H1 (cell line): ENCODE measurements at regions of chr14 and their contacts with region 1.

Region 1: DNA sequence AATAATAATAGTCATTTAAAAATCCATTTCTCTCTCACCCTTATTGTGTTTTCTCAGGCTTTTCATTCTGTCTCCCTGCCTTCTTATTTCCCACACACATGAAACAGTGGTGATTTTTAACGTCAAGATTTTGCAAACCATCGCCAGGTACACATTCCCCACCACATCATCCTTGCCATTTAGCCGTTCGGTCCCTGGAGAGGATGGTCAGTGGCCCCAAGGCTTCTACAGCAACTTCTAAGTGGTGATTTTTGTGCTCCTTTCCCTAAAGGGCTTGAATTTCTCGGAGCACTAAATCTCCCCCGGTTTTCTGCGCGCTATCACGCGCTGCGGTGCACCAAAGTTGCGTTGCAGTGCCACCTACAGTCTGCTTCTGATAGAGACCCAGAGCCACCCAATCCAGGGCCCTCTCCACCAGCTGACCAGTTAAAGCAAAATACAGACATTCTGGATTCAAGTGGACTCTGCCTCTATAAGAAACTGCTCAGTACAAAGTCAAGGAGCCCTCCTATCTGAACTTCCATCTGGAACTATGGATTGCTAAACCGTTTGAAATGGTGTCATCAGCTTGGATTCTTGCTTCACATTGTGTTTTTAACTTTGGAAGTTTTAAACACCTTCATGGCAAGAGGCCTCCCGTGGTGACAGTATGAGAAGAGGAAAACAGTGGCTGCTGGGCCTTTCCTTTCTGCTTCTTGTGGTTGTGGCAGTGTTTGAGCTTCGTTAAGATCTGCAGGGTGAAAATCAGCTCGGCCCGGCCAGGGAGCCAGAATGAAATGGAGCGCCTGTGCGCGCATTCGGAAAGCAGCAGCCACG is 234.0 kb downstream of the SPTSSA start:
- DNase-seq: peak; percentile 41 to 83
- H3K4me3 ChIP-seq: no peak overlapping the region; a peak in 1 of 8 replicates
- H3K27ac ChIP-seq: no peak overlapping the region
- H3K4me1 ChIP-seq: peaks cover 0 to 6% (median 1%) of the 10 kb centered on the region in 4 experiments; a peak in 3 of 7 replicates
- H3K27me3 ChIP-seq: no peaks in the 10 kb centered on the region
- CTCF ChIP-seq: peak; percentile 72 to 77 (median 74)
- EP300 ChIP-seq: no peak
- POLR2A ChIP-seq: no peak
- RAD21 ChIP-seq: peak; percentile 86 to 89

Region 2: DNA sequence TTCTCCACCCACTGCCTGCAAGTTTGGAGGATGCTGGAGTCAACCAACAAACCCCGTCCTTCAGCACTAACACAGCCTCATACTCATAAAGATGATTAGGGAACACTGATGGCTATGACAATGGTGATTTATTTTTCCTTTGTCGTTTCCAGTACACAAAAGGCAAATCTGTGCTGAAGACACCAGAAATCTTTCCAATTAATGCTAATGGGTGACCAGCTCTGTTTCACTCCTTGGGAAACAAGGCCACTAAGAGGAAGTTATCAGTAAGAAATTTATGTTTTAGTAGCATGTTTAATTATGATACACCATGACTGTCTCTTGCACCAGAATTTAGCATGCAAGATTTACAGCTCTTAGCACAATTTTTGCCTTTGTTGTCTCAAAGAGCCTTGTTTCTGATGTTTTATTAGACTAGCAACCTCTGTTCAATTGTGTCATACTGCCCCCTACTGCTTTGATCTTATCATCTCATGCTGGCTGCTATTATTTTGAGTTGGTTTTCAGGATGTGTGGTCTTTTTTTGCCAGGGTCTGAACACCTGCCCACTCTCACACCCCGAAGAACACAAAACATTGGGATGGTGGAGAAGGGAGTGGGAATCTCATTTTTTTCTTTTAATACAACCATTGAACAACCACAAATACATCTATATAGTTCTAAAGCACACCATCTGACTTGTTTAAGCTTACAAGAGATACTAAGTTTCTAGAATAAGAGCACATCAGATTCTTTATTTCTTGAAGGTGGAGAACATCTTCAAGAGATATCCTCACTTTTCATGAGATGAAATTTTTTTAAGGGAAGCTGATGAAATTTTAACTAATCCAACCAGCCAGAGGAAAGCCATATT is 73.1 kb after region 1 on chr14:
- CTCF ChIA-PET with region 1: interaction called, 11 read pairs
- POLR2A ChIA-PET with region 1: no interaction called
- DNase-seq: no peak
- H3K4me3 ChIP-seq: no peak overlapping the region
- H3K27ac ChIP-seq: no peak overlapping the region
- H3K4me1 ChIP-seq: peaks cover 0 to 3% (median 0%) of the 10 kb centered on the region in 4 experiments; a peak in 1 of 7 replicates
- H3K27me3 ChIP-seq: no peaks in the 10 kb centered on the region
- CTCF ChIP-seq: peak in 2 of 3 experiments; percentile 56 to 70; a peak in 2 of 4 replicates
- EP300 ChIP-seq: no peak
- POLR2A ChIP-seq: no peak
- RAD21 ChIP-seq: peak; percentile 83 to 85